Heart right ventricle (tissue), 16 donors: ENCODE measurements at regions of chr5 and their contacts with region 1.

Region 1: DNA sequence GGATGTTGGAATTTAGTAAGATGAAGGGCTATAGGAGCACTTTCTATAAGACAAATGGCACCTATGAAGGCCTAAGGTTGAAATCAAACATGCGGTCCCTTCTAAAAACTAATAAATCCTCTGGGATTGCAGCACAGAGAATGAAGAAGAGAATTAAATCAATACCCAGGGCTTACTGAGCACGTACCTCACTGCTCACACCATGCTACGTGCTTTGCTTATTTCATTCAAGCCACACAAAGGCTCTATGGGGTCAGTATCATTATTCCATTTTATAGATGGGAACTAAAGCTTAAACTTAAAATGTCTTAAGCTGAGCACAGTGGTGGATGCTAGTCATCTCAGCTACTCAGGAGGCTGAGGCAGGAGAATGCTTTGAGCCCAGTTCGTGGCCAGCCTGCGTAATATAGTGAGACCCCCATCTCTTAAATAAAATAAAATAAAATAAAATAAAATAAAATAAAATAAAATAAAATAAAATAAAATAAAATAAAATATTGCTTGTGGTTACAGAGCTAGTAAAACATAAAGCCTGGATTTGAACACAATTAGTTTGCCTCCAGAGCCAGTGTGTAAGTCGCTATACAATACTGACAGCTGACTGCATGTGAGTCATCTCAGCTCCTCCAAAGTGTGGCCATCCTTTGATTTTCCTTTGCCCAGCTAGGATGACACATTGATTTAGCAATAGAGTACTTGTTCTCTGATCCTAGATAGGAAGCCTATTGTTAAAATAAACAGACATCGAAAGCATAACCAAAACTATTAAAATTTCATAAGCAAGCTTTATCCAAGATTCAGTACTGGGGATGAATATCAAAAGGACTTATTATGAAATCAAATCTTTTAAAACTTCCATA is 20.9 kb upstream of the DPYSL3 start:
- DNase-seq: no peak
- ATAC-seq: no peak
- H3K4me3 ChIP-seq: no peak overlapping the region
- H3K27ac ChIP-seq: peak overlapping the region in 1 of 10 donors; percentile 6
- H3K4me1 ChIP-seq: peaks cover 0 to 3% (median 0%) of the 10 kb centered on the region in 9 donors
- H3K27me3 ChIP-seq: peaks cover 0 to 5% (median 0%) of the 10 kb centered on the region in 7 donors
- CTCF ChIP-seq: no peak

Region 2: DNA sequence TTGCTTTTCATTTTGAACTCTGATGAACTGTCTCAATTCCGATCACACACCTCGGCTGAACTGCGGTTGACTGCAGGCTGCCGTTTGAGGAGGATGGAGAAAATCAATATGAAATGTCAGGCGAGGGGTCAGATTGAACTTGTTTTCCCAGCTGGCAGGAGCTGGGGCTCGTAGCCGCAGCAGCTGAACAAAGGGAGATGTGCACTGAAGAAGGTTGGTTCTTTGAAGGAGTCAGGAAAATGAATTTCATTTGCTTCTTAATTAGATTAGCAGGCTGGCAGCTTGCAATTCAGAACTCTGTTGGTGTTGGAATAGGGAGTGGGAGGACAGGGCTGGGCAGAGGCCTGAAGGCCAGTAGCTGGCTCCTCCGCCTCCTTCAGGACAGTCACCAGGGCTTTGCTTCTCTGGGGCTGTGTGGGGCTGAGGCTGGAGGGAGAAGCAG is 897.4 kb before region 1 on chr5:
- intact Hi-C with region 1: no loop called
- DNase-seq: no peak
- ATAC-seq: no peak
- H3K4me3 ChIP-seq: no peak overlapping the region
- H3K27ac ChIP-seq: no peak overlapping the region
- H3K4me1 ChIP-seq: peaks cover 0 to 7% (median 0%) of the 10 kb centered on the region in 9 donors
- H3K27me3 ChIP-seq: no peaks in the 10 kb centered on the region
- CTCF ChIP-seq: no peak

Region 3: DNA sequence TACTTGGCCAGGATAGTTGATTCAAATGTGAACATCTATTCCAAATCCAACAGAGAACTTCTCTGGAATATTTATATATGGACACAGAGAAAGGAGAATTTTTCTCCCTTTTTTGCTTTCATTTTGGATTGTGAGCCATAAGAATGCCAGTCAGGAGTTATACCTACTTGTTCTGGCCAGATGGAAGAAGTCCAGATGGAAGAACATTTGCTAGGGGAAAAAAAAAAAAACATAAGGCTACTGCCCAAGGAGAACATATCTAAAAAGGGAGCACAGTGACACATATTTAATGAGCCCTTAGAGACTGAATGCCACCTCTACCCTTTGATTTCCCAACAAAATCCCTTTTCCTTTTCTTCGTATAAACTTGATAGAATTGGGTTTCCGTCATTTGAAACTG is 590.5 kb before region 1 on chr5:
- intact Hi-C with region 1: loop called in 1 of 10 experiments (anchors 5 kb)
- DNase-seq: no peak
- ATAC-seq: no peak
- H3K4me3 ChIP-seq: no peak overlapping the region
- H3K27ac ChIP-seq: no peak overlapping the region
- H3K4me1 ChIP-seq: no peaks in the 10 kb centered on the region
- H3K27me3 ChIP-seq: peaks cover 0 to 12% (median 0%) of the 10 kb centered on the region in 7 donors
- CTCF ChIP-seq: no peak

Region 4: DNA sequence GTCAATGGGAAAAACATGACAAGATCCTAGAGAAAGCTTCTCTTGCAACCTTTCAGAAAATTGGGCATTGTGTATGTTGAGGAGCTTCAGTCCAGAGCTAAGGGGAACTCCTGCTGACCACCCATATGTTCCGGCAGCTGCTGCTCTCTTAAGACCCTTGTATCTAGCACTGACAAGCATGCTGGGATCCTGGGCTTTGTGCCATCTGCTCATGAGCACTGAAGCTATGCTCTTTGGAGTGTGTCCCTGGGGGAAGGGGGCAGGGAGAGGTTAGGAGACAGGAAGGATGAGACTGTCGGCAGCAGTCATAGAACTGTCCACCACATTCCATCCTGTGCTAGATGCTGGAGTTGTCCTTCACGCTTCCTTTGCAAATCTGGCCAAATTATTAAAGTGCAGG is 142.5 kb after region 1 on chr5:
- intact Hi-C with region 1: no loop called
- DNase-seq: peak in 1 of 2 donors; percentile 18
- ATAC-seq: no peak
- H3K4me3 ChIP-seq: no peak overlapping the region
- H3K27ac ChIP-seq: no peak overlapping the region
- H3K4me1 ChIP-seq: peaks cover 0 to 8% (median 0%) of the 10 kb centered on the region in 9 donors
- H3K27me3 ChIP-seq: peaks cover 0 to 10% (median 0%) of the 10 kb centered on the region in 7 donors
- CTCF ChIP-seq: no peak